PC-9 (cell line): ENCODE measurements at regions of chr12 and their contacts with region 1.

Region 1: GRCh38 chr12:104456417-104456949 is at the start of gene CHST11:
- DNase-seq: peak; percentile 59 to 84
- H3K4me3 ChIP-seq: peak within 1 kb of the TSS; percentile 89
- H3K27ac ChIP-seq: peak within 1 kb of the TSS; percentile 58
- H3K4me1 ChIP-seq: peaks cover 41% of the 10 kb centered on the region
- H3K27me3 ChIP-seq: no peaks in the 10 kb centered on the region
- CTCF ChIP-seq: no peak
- total RNA-seq, gene CHST11: 39.9 and 52.2 TPM in 2 replicates

Region 2: GRCh38 chr12:103858953-103859601 is 597.4 kb before region 1 on chr12:
- CTCF ChIA-PET with region 1: no interaction called
- POLR2A ChIA-PET with region 1: no interaction called
- intact Hi-C with region 1: no loop called
- DNase-seq: peak; percentile 73 to 96
- H3K4me3 ChIP-seq: peak overlapping the region; percentile 22; the same call in 1 of the 2 replicates
- H3K27ac ChIP-seq: peak overlapping the region; percentile 86
- H3K4me1 ChIP-seq: peaks cover 34% of the 10 kb centered on the region
- H3K27me3 ChIP-seq: no peaks in the 10 kb centered on the region
- CTCF ChIP-seq: no peak

Region 3: GRCh38 chr12:104411826-104412641 is 44.4 kb before region 1 on chr12:
- CTCF ChIA-PET with region 1: interaction called, 5 read pairs
- POLR2A ChIA-PET with region 1: interaction called, 4 read pairs
- intact Hi-C with region 1: loop called (anchors 1 kb)
- DNase-seq: peak; percentile 9 to 42
- H3K4me3 ChIP-seq: no peak overlapping the region
- H3K27ac ChIP-seq: no peak overlapping the region
- H3K4me1 ChIP-seq: peaks cover 98% of the 10 kb centered on the region
- H3K27me3 ChIP-seq: no peaks in the 10 kb centered on the region
- CTCF ChIP-seq: no peak

Region 4: DNA sequence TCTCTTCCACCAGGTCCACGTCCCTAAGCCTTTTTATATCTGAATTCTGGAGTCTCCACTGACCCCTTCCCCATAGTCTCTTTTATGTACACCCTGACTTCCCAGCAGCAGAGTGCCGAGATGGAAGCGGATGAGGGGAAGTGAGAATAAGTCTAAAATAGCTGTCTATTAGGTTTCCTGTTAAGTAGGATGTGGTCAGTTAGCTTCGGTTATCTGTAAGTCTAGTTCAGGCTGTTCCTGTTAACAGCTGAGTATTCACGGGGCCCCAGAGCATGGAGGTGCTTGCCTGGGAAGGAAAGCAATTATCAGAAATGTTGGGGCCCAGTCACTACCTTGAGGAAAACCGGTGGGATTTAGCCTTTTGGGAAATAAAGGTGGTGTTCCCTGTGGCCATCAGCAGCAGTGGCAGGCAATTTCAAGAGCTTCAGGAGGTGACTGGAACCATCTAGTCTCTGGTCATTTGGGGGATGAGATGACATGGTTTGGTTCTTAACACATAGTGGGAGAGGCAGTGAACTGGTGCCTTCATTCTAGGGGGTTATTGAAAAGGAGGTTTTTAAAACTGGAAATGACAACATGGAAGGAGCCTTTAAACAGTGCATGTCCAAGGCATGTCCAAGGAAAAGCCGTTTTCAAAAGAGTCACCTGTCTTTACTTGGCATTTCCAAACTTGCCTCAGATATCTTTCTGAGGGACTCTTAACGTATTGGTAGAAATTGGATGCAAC is 22.1 kb after region 1 on chr12:
- CTCF ChIA-PET with region 1: no interaction called
- POLR2A ChIA-PET with region 1: no interaction called
- intact Hi-C with region 1: no loop called
- DNase-seq: no peak
- H3K4me3 ChIP-seq: no peak overlapping the region
- H3K27ac ChIP-seq: no peak overlapping the region
- H3K4me1 ChIP-seq: peaks cover 25% of the 10 kb centered on the region
- H3K27me3 ChIP-seq: no peaks in the 10 kb centered on the region
- CTCF ChIP-seq: no peak

Region 5: GRCh38 chr12:104526320-104526719 is 69.8 kb after region 1 on chr12:
- CTCF ChIA-PET with region 1: interaction called, 14 read pairs
- POLR2A ChIA-PET with region 1: no interaction called
- intact Hi-C with region 1: no loop called
- DNase-seq: no peak
- H3K4me3 ChIP-seq: no peak overlapping the region
- H3K27ac ChIP-seq: no peak overlapping the region
- H3K4me1 ChIP-seq: peaks cover 3% of the 10 kb centered on the region; the same call in 1 of the 2 replicates
- H3K27me3 ChIP-seq: no peaks in the 10 kb centered on the region
- CTCF ChIP-seq: no peak

Region 6: DNA sequence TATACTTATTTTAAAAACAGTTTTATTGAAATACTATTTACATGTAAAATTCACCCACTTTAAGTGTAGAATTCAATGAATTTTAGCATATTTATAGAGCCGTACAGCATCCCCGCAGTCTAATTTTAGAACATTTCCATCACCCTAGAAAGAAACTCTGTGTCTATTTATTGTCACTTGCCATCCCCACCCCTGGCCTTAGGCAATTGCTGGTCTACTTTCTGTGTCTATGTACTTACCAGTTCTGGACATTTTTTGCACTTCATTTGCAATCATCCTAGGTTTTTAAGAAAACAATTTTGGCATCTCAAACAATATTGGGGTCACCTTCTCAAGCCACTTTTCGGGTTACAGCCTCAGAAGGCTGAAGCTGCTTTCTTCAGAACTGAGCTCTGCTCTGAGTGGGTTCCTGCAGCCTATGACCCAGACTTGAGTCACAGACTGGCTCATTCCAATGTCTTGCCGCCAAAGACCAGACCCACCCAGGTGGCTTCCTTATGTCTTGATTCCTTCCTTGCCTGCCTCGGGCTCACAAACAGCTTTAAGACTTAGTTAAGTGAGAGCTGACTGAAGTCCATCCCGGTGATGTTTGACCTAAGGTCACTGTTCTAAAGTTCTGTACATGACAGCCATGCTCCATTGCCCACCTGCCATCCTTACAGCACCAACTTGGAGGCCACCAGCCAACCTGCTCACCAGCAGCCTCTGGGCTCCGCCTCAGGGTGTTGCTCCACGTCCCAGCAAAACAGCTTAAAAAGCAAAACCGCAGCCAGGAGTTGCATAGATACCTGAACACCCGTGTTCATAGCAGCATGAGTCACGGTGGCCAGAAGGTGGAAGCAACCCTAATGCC is 131.8 kb after region 1 on chr12:
- CTCF ChIA-PET with region 1: no interaction called
- POLR2A ChIA-PET with region 1: no interaction called
- intact Hi-C with region 1: loop called (anchors 2 kb)
- DNase-seq: peak; percentile 90 to 98
- H3K4me3 ChIP-seq: peak overlapping the region; percentile 41
- H3K27ac ChIP-seq: peak overlapping the region; percentile 91
- H3K4me1 ChIP-seq: peaks cover 71% of the 10 kb centered on the region
- H3K27me3 ChIP-seq: no peaks in the 10 kb centered on the region
- CTCF ChIP-seq: no peak

Region 7: DNA sequence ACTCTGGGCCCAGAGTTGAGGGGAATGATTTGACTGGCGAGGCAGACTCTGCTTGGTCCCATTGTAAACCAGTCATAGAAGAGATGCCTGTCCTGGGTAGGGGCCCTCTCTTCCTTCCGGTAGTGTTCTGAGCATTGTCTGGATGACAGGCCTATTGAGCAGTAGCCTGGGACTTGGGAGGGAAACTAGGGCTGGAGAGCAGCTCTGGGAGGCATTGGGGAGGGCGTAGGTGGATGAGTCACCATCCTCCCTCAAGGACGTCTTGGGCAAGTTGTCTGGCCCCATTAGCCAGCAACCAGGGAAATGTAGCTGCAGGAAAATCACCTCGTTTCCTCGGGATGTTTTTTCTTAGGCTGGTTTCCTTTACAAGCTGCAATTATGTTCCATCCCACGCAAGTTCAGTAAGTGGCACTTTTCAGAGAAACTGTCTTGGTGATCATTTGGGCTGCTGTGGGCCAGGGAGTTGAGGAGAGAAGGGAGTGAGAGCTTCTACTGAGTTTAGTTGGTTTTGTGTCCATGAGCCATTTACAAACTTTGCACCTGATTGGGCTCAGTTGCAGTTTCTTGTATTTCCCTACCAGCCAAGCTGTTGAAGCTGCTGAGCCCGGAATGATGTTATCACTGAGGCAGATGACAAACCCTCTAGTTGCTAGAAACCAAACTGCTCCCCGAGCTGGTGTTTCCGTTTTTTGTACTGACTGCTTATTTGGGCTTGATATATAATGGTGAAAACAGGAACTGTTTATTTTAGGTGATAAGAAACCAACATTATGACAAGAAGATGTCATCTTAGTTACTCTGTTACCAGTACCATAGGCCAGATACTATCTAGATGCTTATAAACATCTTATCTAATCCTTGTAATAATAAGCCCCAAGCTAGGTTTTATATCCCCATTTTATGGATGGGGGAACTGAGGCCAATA is 147.8 kb after region 1 on chr12:
- CTCF ChIA-PET with region 1: no interaction called
- POLR2A ChIA-PET with region 1: interaction called, 3 read pairs
- intact Hi-C with region 1: loop called (anchors 5 kb)
- DNase-seq: peak; percentile 77 to 90
- H3K4me3 ChIP-seq: peak overlapping the region; percentile 45; the same call in 1 of the 2 replicates
- H3K27ac ChIP-seq: peak overlapping the region; percentile 95
- H3K4me1 ChIP-seq: peaks cover 80% of the 10 kb centered on the region
- H3K27me3 ChIP-seq: no peaks in the 10 kb centered on the region
- CTCF ChIP-seq: no peak

Region 8: DNA sequence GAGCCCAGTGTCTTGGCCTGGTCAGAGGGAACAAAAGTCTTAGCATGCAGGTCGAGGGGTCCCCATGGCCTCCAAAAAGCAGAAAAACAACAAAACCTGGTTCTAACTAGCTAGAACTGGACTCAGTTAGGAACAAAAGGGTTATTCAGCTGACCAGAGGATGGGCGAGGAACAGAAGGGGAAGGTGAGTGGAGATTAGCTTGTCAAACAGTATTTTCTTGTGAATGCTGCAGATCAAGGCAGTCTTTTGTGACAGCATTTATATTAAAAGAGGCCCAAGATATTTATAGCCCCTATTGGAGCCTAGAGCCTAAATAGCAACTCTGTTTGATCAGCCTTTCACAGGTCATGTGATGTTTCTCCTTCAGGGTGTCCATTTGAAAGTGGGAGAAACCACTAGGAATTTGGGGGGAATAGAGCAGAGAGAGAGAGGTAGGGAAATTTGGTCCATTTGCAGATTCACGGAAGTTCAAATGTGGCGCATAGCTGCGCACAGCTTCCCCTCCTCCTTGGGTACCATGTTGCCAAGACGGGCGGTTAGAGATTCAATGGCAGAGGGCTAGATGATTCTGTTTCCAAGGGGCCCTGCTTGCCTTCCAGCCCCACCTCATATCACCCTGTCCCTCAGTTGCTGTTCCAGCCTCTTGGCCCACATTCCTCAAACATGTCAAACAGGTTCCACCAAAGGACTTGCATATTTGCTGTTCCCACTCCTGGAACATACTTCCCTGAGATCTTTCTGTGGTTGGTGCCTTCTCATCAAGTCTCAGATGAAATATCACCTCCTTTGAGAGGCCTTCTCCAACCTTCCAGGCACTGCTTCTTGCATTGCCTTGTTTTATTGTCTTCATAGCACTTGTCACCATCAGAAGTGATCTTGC is 221.0 kb after region 1 on chr12:
- CTCF ChIA-PET with region 1: no interaction called
- POLR2A ChIA-PET with region 1: no interaction called
- intact Hi-C with region 1: loop called (anchors 1 kb)
- DNase-seq: peak; percentile 77 to 96
- H3K4me3 ChIP-seq: 0 out of 2 replicates have a peak overlapping the region, but pooled peaks have one; percentile 18
- H3K27ac ChIP-seq: peak overlapping the region; percentile 87
- H3K4me1 ChIP-seq: peaks cover 68% of the 10 kb centered on the region
- H3K27me3 ChIP-seq: no peaks in the 10 kb centered on the region
- CTCF ChIP-seq: no peak